AG04450 (cell line): ENCODE measurements at regions of chr5 and their contacts with region 1.

Region 1: GRCh38 chr5:75049456-75050351 is 2.7 kb downstream of the GCNT4 start:
- DNase-seq: no peak
- H3K4me3 ChIP-seq: no peak overlapping the region
- H3K27ac ChIP-seq: no peak overlapping the region
- H3K27me3 ChIP-seq: peaks cover 5% of the 10 kb centered on the region
- CTCF ChIP-seq: peak; percentile 77

Region 2: DNA sequence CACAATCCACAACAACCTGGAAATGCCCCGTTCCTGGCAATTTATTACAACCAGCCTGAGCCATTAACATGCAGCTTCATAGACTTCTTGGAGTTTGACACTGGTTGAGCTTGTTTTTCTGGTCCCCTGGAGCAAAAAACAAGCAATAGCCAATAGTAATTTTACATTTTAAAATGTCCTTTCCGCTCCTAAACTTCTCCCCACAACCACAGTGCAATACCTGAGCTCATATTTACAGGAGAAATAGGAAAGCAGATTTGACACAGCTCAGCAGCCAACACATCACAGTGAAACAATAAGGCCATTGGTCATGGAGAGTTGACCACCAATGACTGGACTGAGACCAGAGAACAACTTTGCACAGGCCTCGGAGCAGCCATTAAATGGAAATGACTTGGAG is 482.2 kb before region 1 on chr5:
- CTCF ChIA-PET with region 1: no interaction called
- POLR2A ChIA-PET with region 1: no interaction called
- DNase-seq: no peak
- H3K4me3 ChIP-seq: no peak overlapping the region
- H3K27ac ChIP-seq: no peak overlapping the region
- H3K27me3 ChIP-seq: no peaks in the 10 kb centered on the region
- CTCF ChIP-seq: no peak

Region 3: DNA sequence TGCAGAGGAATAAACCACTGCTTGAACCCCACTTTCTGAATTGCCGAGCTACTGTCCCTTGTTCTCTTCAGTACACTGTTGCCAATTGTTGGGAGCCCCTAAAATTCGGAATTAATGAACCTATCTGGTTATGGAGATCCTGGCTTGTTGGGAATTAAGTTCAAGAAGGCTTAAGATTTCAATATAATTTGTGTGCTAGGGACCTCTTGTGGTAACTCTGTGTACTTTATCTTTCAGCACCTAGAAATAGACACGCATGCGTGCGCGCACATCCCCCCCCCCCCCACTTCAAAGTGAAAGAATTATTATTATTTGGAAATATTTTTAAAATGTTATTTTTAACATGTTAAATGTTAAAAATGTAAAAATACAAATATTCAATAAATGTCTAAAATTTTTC is 130.2 kb before region 1 on chr5:
- CTCF ChIA-PET with region 1: interaction called, 12 read pairs
- POLR2A ChIA-PET with region 1: no interaction called
- DNase-seq: peak; percentile 18
- H3K4me3 ChIP-seq: no peak overlapping the region
- H3K27ac ChIP-seq: no peak overlapping the region
- H3K27me3 ChIP-seq: no peaks in the 10 kb centered on the region
- CTCF ChIP-seq: peak; percentile 66

Region 4: GRCh38 chr5:74953940-74954720 is 95.6 kb before region 1 on chr5:
- CTCF ChIA-PET with region 1: interaction called, 19 read pairs
- POLR2A ChIA-PET with region 1: interaction called, 4 read pairs
- DNase-seq: no peak
- H3K4me3 ChIP-seq: no peak overlapping the region
- H3K27ac ChIP-seq: peak overlapping the region; percentile 81
- H3K27me3 ChIP-seq: no peaks in the 10 kb centered on the region
- CTCF ChIP-seq: no peak

Region 5: GRCh38 chr5:75037135-75037534 is 12.6 kb before region 1 on chr5:
- CTCF ChIA-PET with region 1: interaction called, 18 read pairs
- POLR2A ChIA-PET with region 1: no interaction called
- DNase-seq: peak; percentile 51
- H3K4me3 ChIP-seq: no peak overlapping the region
- H3K27ac ChIP-seq: no peak overlapping the region
- H3K27me3 ChIP-seq: peaks cover 1% of the 10 kb centered on the region
- CTCF ChIP-seq: no peak

Region 6: DNA sequence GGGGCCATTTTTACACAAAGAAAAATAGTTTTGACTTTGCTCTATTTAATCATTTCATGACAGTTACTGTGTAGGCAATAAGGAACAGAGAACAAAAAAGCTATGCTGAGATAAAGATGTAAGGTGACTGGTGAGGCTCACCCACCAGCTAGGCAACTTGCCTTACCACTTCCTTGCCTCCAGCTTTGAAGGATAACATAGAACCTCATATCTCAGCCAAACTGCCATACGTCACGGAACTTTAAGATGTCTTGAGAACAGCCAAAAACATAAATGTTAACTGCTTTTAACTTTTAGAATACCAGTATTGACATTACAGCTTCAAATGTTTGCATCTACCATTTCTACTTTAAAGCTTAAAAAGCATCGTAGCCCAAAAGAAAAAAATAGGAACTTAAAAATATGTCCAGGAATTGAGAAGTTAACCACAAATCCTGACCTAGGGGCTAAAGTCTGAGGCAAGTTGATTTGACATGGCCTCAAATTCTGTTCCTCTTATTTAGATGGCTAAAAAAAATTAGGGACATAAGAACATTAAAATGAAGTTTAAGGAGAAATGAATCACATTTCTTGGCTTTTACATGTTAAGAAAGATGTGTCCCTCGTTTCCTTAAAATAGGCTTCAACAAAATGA is 10.3 kb after region 1 on chr5:
- CTCF ChIA-PET with region 1: interaction called, 11 read pairs
- POLR2A ChIA-PET with region 1: no interaction called
- DNase-seq: no peak
- H3K4me3 ChIP-seq: no peak overlapping the region
- H3K27ac ChIP-seq: no peak overlapping the region
- H3K27me3 ChIP-seq: no peaks in the 10 kb centered on the region
- CTCF ChIP-seq: no peak